Endothelial cell of umbilical vein (primary cell): ENCODE measurements at regions of chr3 and their contacts with region 1.

Region 1: DNA sequence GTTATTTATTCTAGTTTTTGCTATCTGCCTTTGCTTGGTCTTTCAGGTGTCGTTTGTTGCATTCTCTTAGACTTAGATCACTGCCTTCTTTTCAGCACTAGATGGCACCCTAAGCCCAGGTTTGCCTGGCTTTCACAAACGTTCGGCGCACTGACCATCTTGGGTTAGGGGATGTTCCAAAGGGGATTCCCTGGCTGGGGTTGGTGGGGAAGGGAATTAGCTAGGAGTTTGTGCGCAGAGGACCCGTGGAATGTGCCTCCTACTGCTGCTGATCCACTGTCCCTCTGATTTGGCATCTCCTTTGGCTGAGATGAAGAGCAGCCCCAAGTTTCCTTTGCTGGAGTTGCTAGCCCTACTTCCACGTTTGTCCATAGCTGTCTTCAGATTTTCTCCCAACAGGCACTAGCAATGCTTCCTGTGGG is 33.9 kb downstream of the PFN2 start:
- DNase-seq: peak; percentile 70
- H3K4me3 ChIP-seq: no peak overlapping the region
- H3K27ac ChIP-seq: no peak overlapping the region
- H3K4me1 ChIP-seq: peaks cover 2% of the 10 kb centered on the region
- H3K27me3 ChIP-seq: no peaks in the 10 kb centered on the region
- CTCF ChIP-seq: peak; percentile 70 to 76
- POLR2A ChIP-seq: no peak

Region 2: DNA sequence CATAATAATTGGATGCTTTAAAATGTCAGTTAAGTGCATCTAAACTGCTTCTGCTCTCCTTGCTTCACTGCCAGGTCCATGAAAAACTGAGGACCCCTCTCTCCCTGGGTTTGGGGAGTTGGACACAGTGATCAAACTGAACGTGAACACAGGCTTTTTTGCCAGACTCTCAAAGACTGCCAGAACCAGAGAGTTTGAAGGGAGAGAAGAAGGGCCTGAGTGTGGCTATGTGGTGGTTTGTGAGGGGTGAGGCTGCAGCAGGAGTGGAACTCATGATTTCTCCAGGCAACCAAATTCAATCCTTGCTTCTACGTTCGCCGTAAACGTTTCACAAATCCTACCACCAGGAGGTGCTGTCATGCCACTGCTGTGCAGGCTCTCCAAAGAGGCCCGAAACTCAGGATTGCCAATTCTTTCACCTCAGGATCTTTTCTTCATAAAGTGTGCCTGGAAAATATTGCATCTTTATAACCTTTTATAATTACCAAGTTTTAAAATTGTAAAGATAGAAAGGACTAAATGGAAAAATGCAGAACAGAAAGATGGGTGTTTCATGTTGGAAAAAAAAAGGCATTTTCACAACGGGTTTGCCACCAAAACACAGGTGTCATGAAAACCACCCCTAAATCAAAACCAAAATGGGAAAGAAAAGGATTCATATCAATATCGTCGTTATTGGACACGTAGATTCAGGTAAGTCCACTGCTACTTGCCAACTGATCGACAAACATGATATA is 442.6 kb before region 1 on chr3:
- CTCF ChIA-PET with region 1: no interaction called
- POLR2A ChIA-PET with region 1: no interaction called
- dilution Hi-C with region 1: no loop called
- intact Hi-C with region 1: loop called (anchors 10 kb)
- DNase-seq: peak; percentile 76
- H3K4me3 ChIP-seq: no peak overlapping the region
- H3K27ac ChIP-seq: no peak overlapping the region
- H3K4me1 ChIP-seq: peaks cover 6% of the 10 kb centered on the region
- H3K27me3 ChIP-seq: no peaks in the 10 kb centered on the region
- CTCF ChIP-seq: peak; percentile 80 to 83
- POLR2A ChIP-seq: no peak

Region 3: DNA sequence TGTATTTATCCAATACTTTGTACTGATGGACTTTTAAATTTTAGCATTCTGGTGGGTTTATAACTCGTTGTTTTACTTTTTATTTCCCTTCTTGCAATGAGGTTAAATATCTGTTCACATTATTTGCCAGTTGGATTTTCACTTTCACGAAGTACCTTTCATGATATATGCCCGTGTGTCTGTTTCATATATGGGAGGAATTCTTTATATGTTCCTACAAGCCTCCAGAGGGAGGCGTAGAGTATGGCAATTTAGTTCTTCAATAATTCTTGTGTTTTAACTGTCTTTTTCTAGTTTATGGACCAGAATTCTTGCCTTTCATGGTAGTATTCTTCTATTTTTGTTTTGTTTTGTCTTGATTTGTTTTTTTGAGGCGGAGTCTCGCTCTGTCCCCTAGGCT is 11.0 kb before region 1 on chr3:
- CTCF ChIA-PET with region 1: interaction called, 11 read pairs
- POLR2A ChIA-PET with region 1: no interaction called
- dilution Hi-C with region 1: no loop called
- intact Hi-C with region 1: no loop called
- DNase-seq: no peak
- H3K4me3 ChIP-seq: no peak overlapping the region
- H3K27ac ChIP-seq: no peak overlapping the region
- H3K4me1 ChIP-seq: no peaks in the 10 kb centered on the region
- H3K27me3 ChIP-seq: no peaks in the 10 kb centered on the region
- CTCF ChIP-seq: no peak
- POLR2A ChIP-seq: no peak

Region 4: DNA sequence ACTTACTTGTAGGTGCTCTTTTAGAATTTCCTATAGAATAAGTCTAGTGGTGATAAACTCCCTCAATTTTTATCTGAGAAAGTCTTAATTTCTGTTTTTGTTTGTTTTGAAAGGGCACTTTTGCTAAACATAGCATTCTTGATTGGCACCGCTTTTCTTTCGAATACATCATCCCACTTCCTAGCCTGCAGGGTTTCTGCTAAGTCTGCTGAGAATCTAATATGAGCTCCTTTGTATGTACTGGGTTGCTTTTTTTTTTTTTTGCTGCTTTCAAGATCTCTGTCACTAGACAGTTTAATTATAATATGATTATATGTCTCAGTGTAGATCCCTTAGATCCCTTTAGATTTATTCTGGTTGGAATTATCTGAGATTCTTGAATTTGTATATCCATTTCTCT is 12.4 kb after region 1 on chr3:
- CTCF ChIA-PET with region 1: interaction called, 10 read pairs
- POLR2A ChIA-PET with region 1: no interaction called
- dilution Hi-C with region 1: no loop called
- intact Hi-C with region 1: no loop called
- DNase-seq: no peak
- H3K4me3 ChIP-seq: no peak overlapping the region
- H3K27ac ChIP-seq: no peak overlapping the region
- H3K4me1 ChIP-seq: no peaks in the 10 kb centered on the region
- H3K27me3 ChIP-seq: no peaks in the 10 kb centered on the region
- CTCF ChIP-seq: no peak
- POLR2A ChIP-seq: no peak

Region 5: DNA sequence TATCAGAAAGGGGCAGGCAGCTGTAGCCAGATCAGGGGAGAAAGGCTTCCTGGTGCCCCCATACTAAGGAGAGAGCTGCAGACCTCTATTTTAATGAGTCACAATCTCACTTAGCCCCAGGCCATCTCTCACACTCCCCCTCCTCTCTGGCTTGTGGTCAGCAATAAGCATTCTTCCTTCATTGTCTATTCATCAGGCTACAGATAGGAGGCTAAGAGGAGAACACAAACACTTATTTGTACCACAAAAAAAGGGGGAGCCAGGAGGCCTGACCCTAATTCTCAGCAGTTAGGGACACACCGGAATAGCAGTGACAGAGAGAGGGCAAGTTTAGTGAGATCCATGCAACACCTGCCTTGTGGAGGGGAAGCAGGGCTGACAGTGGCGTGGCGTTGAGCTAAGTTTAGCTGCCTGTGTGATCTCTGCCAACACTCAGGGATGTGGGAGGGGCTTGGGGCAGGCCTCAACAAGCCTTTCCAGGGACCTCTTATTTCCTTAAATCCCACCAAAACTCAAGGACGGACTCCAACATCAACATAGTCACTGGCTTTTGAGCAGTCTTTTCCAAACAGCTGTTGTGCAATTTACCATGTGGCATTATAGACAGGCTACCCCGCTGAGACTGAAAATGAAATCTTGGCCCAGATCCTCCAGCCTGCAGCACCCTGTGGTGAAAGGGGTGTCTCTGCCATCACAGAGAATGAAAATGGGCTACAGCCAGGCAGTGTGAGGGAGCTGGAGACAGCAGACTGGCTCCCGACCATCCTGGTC is 279.4 kb after region 1 on chr3:
- CTCF ChIA-PET with region 1: interaction called, 41 read pairs
- POLR2A ChIA-PET with region 1: no interaction called
- dilution Hi-C with region 1: no loop called
- intact Hi-C with region 1: loop called (anchors 1 kb)
- DNase-seq: peak; percentile 12
- H3K4me3 ChIP-seq: no peak overlapping the region
- H3K27ac ChIP-seq: no peak overlapping the region
- H3K4me1 ChIP-seq: no peaks in the 10 kb centered on the region
- H3K27me3 ChIP-seq: peaks cover 24 to 26% of the 10 kb centered on the region in 2 experiments
- CTCF ChIP-seq: no peak
- POLR2A ChIP-seq: no peak